ENCODE measurements at regions of chr4 and their contacts with region 1.

Region 1: GRCh38 chr4:153750197-153750817 is 9.5 kb downstream of the RNF175 start:
- DNase-seq: peak; percentile 24
- H3K4me3 ChIP-seq: no peak overlapping the region
- H3K27ac ChIP-seq: no peak overlapping the region
- H3K27me3 ChIP-seq: no peaks in the 10 kb centered on the region
- CTCF ChIP-seq: peak; percentile 76

Region 2: DNA sequence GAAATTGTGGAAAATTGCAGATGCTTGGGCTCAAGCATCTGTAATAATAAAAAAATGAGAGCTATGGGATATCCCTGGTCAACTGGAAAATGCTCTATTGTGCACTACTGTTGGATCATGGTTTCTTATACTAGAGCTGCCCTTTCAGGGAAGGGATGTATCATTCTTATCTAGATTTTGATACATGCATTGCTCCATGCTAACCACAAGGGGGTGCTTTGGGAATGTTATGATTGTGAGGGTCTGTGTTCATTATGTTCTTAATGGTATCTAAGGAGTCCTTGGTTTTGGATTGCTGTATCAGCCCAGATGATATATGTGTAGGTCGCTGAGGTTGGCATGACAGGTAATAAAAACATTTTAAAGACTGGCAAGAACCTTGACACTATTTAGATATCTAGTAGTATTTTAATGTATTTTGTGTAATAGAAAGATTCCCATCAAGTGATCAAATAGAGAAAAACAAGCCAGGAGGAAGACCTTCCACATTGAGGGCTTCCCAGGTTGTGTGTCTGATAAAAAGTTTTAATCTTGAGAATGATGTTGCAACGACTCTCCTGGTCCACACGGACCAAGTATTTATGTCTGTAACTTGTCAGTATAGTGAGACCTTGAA is 115.5 kb before region 1 on chr4:
- CTCF ChIA-PET with region 1: interaction called, 11 read pairs
- POLR2A ChIA-PET with region 1: no interaction called
- DNase-seq: no peak
- H3K4me3 ChIP-seq: no peak overlapping the region
- H3K27ac ChIP-seq: no peak overlapping the region
- H3K27me3 ChIP-seq: no peaks in the 10 kb centered on the region
- CTCF ChIP-seq: peak; percentile 55

Region 3: GRCh38 chr4:153643406-153644383 is 106.6 kb before region 1 on chr4:
- CTCF ChIA-PET with region 1: interaction called, 20 read pairs
- POLR2A ChIA-PET with region 1: no interaction called
- DNase-seq: no peak
- H3K4me3 ChIP-seq: no peak overlapping the region
- H3K27ac ChIP-seq: no peak overlapping the region
- H3K27me3 ChIP-seq: no peaks in the 10 kb centered on the region
- CTCF ChIP-seq: peak; percentile 61

Region 4: DNA sequence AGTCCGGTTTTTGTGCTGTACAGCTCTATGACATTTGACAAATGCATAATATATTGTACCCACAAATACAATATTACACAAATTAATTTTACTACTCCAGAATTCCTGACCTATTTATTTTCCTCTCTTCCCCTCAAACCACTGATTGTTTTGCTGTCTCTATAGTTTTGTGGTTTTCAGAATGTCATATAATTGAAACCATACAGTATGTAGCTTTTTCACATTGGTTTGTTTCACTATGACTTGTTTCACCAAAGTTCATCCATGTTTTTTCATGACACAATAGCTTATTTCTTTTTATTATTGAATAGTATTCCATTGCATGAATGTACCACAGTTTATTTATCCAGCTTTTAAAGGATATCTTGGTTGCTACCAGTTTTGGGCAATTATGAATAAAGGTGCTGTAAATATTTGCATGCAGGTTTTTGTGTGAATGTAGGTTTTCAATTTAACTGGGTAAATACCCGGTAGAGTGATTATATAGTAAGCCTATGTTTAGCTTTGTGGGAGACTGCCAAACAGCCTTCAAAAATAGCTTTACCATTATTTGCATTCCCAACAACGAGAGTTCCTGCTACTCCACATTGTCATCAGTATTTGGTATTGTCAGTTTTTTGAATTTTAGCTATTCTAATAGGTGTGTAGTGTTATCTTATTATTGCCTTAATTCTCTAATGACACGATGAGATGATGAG is 16.4 kb before region 1 on chr4:
- CTCF ChIA-PET with region 1: interaction called, 10 read pairs
- POLR2A ChIA-PET with region 1: no interaction called
- DNase-seq: no peak
- H3K4me3 ChIP-seq: no peak overlapping the region
- H3K27ac ChIP-seq: no peak overlapping the region
- H3K27me3 ChIP-seq: no peaks in the 10 kb centered on the region
- CTCF ChIP-seq: no peak

Measured in AG04450 (cell line).